Caco-2 (cell line): ENCODE measurements at regions of chr13 and their contacts with region 1.

Region 1: DNA sequence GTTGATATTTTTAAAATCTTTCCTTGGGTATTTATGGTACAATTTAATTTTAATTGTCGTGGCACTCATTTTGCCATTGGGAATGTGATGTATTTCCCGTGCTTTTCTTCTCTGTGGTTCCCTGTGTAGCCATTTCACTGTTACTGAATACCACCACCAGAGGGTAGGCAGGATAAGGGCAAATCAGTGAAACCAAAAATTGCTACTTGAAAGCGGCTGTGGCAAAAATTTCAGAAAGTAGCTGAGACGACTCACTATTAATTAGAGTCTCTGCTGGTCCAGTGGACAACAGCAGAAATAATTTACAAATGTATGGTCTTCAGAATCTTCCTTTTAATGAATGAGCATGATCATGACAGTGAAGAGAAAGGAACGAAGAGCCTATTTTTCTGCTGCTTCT is 34.4 kb upstream of the MIR17HG start:
- DNase-seq: peak in 1 of 2 experiments; percentile 49
- H3K4me3 ChIP-seq: no peak overlapping the region
- H3K4me3 Mint-ChIP-seq: no peak overlapping the region
- H3K27ac Mint-ChIP-seq: no peak overlapping the region
- H3K4me1 ChIP-seq: no peaks in the 10 kb centered on the region
- H3K4me1 Mint-ChIP-seq: no peaks in the 10 kb centered on the region
- H3K27me3 ChIP-seq: no peaks in the 10 kb centered on the region
- H3K27me3 Mint-ChIP-seq: peaks cover 10% of the 10 kb centered on the region
- CTCF ChIP-seq: peak; percentile 48 to 77

Region 2: GRCh38 chr13:91302111-91302510 is 11.0 kb before region 1 on chr13:
- CTCF ChIA-PET with region 1: no interaction called
- POLR2A ChIA-PET with region 1: no interaction called
- intact Hi-C with region 1: no loop called
- DNase-seq: no peak
- H3K4me3 ChIP-seq: no peak overlapping the region
- H3K4me3 Mint-ChIP-seq: no peak overlapping the region
- H3K27ac Mint-ChIP-seq: no peak overlapping the region
- H3K4me1 ChIP-seq: peaks cover 6% of the 10 kb centered on the region; the same call in 1 of the 2 replicates
- H3K4me1 Mint-ChIP-seq: no peaks in the 10 kb centered on the region
- H3K27me3 ChIP-seq: no peaks in the 10 kb centered on the region
- H3K27me3 Mint-ChIP-seq: peaks cover 8% of the 10 kb centered on the region
- CTCF ChIP-seq: no peak

Region 3: DNA sequence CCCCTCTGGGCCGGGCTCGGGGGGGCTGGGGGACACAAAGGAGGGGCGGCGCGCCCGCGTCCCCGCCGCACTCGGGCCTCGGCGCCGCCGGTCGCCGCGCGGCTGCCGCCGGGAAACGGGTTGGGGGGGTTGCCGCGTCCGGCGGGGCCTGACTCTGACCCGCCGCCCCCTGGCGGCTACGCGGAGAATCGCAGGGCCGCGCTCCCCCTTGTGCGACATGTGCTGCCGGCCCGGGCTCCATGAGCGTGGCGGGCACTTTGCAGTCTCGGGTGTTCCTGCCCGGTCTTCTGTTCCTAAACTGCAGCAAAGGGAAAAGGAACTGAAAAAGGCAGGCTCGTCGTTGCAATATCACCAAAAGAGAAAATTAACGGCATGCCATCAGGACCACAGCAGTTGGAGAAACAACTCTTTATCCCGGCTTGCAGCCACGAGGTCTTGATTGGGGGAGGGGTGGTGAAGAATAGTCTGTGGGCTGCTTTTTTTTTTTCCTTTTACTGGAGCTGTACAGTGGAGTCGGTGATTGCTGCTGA is 35.9 kb after region 1 on chr13:
- CTCF ChIA-PET with region 1: interaction called, 3 read pairs
- POLR2A ChIA-PET with region 1: no interaction called
- intact Hi-C with region 1: loop called (anchors 1 kb)
- DNase-seq: peak; percentile 92 to 97
- H3K4me3 ChIP-seq: peak overlapping the region; percentile 79
- H3K4me3 Mint-ChIP-seq: peak overlapping the region; percentile 95
- H3K27ac Mint-ChIP-seq: peak overlapping the region; percentile 94
- H3K4me1 ChIP-seq: peaks cover 23% of the 10 kb centered on the region
- H3K4me1 Mint-ChIP-seq: no peaks in the 10 kb centered on the region
- H3K27me3 ChIP-seq: no peaks in the 10 kb centered on the region
- H3K27me3 Mint-ChIP-seq: no peaks in the 10 kb centered on the region
- CTCF ChIP-seq: peak; percentile 91 to 92

Region 4: DNA sequence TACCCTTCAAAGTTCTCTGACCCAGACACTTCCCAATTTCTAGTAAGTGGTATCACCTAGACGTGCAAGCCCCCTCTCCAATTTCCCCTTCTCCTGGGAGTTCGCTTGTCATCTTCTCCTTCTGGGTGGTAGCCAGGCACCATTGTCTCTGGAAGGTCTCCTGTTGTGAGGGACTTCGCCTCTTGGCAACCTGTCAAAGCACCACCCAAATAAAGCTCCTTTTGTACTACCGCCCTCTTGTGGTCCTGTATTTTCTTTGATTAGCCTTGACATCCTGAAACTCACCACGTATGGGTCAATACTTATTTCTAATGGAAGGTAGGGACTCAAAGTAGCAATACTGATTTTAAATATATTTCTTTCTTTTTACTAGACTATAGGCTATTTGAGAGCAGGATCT is 93.5 kb after region 1 on chr13:
- CTCF ChIA-PET with region 1: no interaction called
- POLR2A ChIA-PET with region 1: no interaction called
- intact Hi-C with region 1: loop called (anchors 1 kb)
- DNase-seq: peak; percentile 50 to 73
- H3K4me3 ChIP-seq: no peak overlapping the region
- H3K4me3 Mint-ChIP-seq: no peak overlapping the region
- H3K27ac Mint-ChIP-seq: peak overlapping the region; percentile 16
- H3K4me1 ChIP-seq: no peaks in the 10 kb centered on the region; the same call in 1 of the 2 replicates
- H3K4me1 Mint-ChIP-seq: no peaks in the 10 kb centered on the region
- H3K27me3 ChIP-seq: no peaks in the 10 kb centered on the region
- H3K27me3 Mint-ChIP-seq: peaks cover 3% of the 10 kb centered on the region
- CTCF ChIP-seq: peak; percentile 62 to 65

Region 5: GRCh38 chr13:91722267-91722884 is 409.3 kb after region 1 on chr13:
- CTCF ChIA-PET with region 1: no interaction called
- POLR2A ChIA-PET with region 1: no interaction called
- intact Hi-C with region 1: loop called (anchors 5 kb)
- DNase-seq: peak in 1 of 2 experiments; percentile 21
- H3K4me3 ChIP-seq: no peak overlapping the region
- H3K4me3 Mint-ChIP-seq: no peak overlapping the region
- H3K27ac Mint-ChIP-seq: no peak overlapping the region
- H3K4me1 ChIP-seq: peaks cover 43% of the 10 kb centered on the region
- H3K4me1 Mint-ChIP-seq: peaks cover 13% of the 10 kb centered on the region
- H3K27me3 ChIP-seq: no peaks in the 10 kb centered on the region
- H3K27me3 Mint-ChIP-seq: no peaks in the 10 kb centered on the region
- CTCF ChIP-seq: peak; percentile 53 to 63

Region 6: GRCh38 chr13:92012787-92013186 is 699.7 kb after region 1 on chr13:
- CTCF ChIA-PET with region 1: no interaction called
- POLR2A ChIA-PET with region 1: no interaction called
- intact Hi-C with region 1: no loop called
- DNase-seq: no peak
- H3K4me3 ChIP-seq: no peak overlapping the region
- H3K4me3 Mint-ChIP-seq: no peak overlapping the region
- H3K27ac Mint-ChIP-seq: no peak overlapping the region
- H3K4me1 ChIP-seq: no peaks in the 10 kb centered on the region
- H3K4me1 Mint-ChIP-seq: peaks cover 2% of the 10 kb centered on the region
- H3K27me3 ChIP-seq: peaks cover 2% of the 10 kb centered on the region
- H3K27me3 Mint-ChIP-seq: peaks cover 11% of the 10 kb centered on the region
- CTCF ChIP-seq: no peak